ENCODE measurements at regions of chr7 and their contacts with region 1.

Region 1: DNA sequence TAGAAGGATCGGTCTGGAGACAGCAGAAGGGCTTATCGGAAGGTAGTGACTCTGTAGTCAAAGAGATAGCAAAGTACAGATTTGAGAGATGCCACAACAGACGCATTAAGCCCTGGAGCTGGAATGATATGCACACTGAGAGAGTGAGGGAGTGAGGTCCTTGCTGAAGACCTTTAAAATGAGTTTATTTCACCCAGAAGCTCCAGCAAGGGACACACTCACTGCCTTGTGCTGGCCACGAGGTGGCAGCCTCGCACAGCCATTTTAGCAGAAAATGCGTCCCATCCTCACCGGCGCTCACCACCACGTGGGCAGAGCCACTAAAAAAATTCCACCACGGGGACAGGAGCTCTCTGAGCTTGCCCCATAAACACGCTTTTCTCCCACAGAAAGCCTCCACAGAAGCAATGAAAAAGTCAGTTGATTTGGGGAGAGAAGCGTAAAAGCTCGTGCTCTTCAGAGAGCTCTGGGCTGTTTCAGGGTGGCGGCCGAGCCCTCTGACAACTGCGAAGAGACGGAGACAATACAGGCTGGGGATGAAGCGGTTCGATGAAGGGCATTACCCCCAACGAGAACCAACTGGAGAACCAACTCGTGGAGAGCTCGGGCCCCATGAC is 163.0 kb upstream of the KLF14 start:
- DNase-seq: peak; percentile 73

Region 2: GRCh38 chr7:130884437-130885417 is 12.3 kb before region 1 on chr7:
- CTCF ChIA-PET with region 1: interaction called, 11 read pairs
- POLR2A ChIA-PET with region 1: no interaction called
- DNase-seq: no peak

Region 3: DNA sequence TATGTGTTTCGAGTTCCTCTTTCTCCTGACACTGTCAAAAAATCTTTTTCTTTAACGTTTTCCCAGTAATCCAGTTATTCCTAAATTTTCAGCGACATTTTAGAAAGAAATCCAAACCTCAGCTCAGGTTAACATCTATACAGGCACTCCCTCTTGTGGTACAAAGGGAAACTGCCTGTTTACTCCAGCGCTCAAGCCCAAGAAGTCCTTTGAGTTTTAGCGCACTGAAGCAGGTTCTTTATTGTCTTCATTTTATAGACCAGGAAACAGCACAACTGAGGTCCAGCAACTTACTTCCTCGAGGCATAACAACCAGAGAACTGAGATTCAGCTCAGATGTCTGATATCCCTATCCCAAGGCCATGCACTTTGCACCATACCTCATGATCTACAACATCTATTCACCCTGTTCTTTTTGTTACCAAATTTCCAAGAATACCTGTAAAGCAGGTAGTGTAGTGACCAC is 143.5 kb after region 1 on chr7:
- CTCF ChIA-PET with region 1: interaction called, 27 read pairs
- POLR2A ChIA-PET with region 1: no interaction called
- DNase-seq: peak; percentile 62

Measured in HEK293T (cell line).